Common myeloid progenitor, CD34-positive (primary cell): ENCODE measurements at regions of chr16 and their contacts with region 1.

Region 1: GRCh38 chr16:81623363-81624102 is 155.6 kb upstream of the PLCG2 start:
- DNase-seq: peak; percentile 65 to 84 (median 80)
- H3K4me3 ChIP-seq: no peak overlapping the region
- H3K27ac ChIP-seq: peak overlapping the region in 1 of 2 experiments; percentile 29
- H3K4me1 ChIP-seq: peaks cover 3 to 36% (median 25%) of the 10 kb centered on the region in 4 experiments
- H3K27me3 ChIP-seq: no peaks in the 10 kb centered on the region

Region 2: DNA sequence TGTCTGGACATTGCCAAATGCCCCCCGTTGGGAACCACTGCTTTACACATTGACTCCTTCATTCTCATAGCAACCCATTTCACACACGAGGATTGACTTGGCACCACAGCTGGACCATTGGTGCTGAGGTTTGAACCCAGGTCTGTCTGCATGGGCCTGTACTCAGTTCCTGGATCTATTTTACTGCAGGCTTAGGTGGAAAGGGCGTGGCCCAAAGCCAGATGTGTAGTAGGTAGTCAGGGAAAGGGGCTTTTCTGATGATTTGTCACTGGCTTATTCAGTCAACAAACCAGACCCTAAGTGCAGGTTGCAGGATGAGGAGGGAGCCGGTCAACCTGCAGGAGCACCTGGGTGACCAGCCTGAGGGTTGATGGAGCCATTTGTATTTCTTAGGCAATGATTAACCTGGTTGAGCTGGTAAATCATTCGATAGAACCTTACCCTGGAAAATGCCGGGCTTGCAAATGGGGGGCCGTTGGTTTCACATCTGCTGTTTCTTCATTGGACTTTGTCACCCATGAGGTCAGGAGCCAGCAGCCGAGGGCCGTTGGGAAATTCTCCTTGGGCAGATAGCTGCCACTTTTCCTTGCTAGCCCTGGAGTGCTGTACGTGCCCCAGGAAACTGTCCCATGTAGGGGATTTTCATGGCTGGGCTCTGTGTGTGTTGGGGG is 74.5 kb before region 1 on chr16:
- CTCF ChIA-PET with region 1: no interaction called
- POLR2A ChIA-PET with region 1: no interaction called
- DNase-seq: no peak
- H3K4me3 ChIP-seq: no peak overlapping the region
- H3K27ac ChIP-seq: no peak overlapping the region
- H3K4me1 ChIP-seq: peaks cover 3 to 79% (median 64%) of the 10 kb centered on the region in 4 experiments
- H3K27me3 ChIP-seq: no peaks in the 10 kb centered on the region

Region 3: GRCh38 chr16:81608518-81609209 is 14.9 kb before region 1 on chr16:
- CTCF ChIA-PET with region 1: interaction called, 12 read pairs
- POLR2A ChIA-PET with region 1: no interaction called
- DNase-seq: peak in 2 of 3 donors; percentile 68 to 79
- H3K4me3 ChIP-seq: no peak overlapping the region
- H3K27ac ChIP-seq: no peak overlapping the region
- H3K4me1 ChIP-seq: peaks cover 0 to 2% (median 0%) of the 10 kb centered on the region in 4 experiments
- H3K27me3 ChIP-seq: no peaks in the 10 kb centered on the region

Region 4: DNA sequence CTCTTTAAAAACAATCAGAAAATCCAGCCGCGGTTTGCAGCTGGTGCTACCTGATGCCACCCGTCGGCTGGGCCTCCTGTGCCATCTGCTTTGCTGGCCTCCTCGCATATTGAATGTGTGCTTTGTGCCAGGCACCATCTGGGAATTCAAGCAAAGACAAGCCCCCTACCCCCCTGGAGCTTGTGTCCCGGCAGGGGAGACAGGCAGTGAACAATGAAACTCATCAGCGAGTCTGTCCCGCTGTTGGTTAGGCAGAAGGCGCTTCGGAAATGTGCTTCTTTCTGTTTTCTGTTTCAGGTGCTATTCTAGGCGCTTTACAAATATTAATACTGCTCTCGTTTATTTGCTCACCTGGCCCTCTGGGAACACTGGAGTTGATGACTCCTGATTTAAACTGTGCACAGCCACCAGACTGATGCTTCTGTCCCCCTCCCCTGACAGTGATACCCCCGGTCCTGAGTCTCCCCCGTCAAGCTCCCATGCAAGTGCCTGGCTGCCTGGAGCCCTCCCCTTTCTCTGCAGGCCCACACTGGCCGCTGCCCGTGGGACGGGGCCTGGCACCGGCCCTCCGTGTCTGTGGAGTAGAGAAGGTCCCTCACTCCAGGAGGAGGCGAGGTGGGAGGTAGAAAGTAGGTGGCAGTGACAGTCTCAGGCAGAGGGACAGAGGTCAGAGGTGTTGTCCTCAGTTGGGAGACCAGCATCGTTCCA is 29.4 kb after region 1 on chr16:
- CTCF ChIA-PET with region 1: interaction called, 33 read pairs
- POLR2A ChIA-PET with region 1: no interaction called
- DNase-seq: no peak
- H3K4me3 ChIP-seq: no peak overlapping the region
- H3K27ac ChIP-seq: peak overlapping the region in 1 of 2 experiments; percentile 72
- H3K4me1 ChIP-seq: peaks cover 0 to 21% (median 15%) of the 10 kb centered on the region in 4 experiments
- H3K27me3 ChIP-seq: no peaks in the 10 kb centered on the region

Region 5: DNA sequence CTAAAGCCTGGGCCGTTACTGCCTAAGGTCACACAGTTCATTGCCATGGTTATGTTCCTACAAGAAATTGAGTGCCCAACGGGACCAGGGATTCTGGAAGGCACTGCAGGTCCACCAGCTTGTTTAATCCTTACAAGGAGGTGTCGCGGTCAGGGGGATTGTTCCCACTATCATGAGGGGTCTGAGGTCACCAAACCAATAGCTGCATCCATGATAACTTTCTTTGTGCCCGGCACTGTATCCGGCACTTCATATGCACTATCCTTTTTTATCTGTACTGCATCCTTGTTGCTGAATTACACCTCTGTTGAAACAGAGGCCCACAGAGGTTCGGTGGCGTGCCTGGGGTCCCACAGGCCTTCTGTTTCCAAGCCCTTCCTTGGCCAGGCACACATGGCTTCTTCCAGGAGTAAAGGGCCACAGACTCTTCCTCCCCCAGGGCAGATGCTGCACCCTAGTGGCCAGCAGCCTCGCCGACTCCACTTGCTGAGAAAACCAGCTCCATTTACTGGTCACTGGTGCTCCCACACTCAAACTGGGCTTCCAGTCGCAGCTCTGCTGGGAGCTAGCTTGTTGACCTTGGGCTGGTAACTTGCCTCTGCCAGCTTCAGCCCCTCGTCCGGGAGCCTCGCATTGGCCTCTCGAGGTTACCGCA is 73.6 kb after region 1 on chr16:
- CTCF ChIA-PET with region 1: interaction called, 234 read pairs
- POLR2A ChIA-PET with region 1: interaction called, 3 read pairs
- DNase-seq: peak; percentile 61 to 73 (median 68)
- H3K4me3 ChIP-seq: no peak overlapping the region
- H3K27ac ChIP-seq: no peak overlapping the region
- H3K4me1 ChIP-seq: peaks cover 0 to 28% (median 10%) of the 10 kb centered on the region in 4 experiments
- H3K27me3 ChIP-seq: no peaks in the 10 kb centered on the region

Region 6: GRCh38 chr16:81711657-81712319 is 88.3 kb after region 1 on chr16:
- CTCF ChIA-PET with region 1: interaction called, 26 read pairs
- POLR2A ChIA-PET with region 1: interaction called, 9 read pairs
- DNase-seq: peak in 2 of 3 donors; percentile 73 to 79
- H3K4me3 ChIP-seq: no peak overlapping the region
- H3K27ac ChIP-seq: no peak overlapping the region
- H3K4me1 ChIP-seq: peaks cover 0 to 18% (median 7%) of the 10 kb centered on the region in 4 experiments
- H3K27me3 ChIP-seq: no peaks in the 10 kb centered on the region

Region 7: DNA sequence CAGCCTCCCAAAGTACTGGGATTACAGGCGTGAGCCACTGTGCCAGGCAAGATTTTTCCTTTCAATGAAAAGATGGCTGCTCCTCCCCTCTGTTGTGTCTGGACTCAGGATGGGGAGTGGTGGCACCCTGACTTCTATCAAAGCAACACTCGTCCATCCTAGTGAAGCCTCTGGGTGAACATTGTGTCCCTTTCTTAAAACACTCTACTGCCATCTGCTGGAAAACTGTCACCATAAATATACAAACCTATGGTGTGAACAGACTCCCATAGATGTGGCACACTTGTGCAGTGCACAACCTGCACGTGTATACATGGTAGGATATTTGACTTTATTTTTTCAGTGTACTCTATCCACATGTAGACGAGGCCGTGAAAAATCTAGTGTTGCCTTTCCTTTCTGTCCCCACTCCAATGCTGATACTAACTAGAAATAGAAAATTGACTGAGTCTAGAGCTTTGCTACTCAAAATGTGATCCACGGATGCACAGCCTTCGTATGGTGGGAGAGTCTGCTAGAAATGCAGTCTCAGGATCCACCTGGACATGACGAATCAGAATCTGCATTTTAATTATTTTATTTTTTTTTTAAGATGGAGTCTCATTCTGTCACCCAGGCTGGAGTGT is 99.7 kb after region 1 on chr16:
- CTCF ChIA-PET with region 1: interaction called, 54 read pairs
- POLR2A ChIA-PET with region 1: no interaction called
- DNase-seq: peak; percentile 82 to 91 (median 90)
- H3K4me3 ChIP-seq: no peak overlapping the region
- H3K27ac ChIP-seq: no peak overlapping the region
- H3K4me1 ChIP-seq: peaks cover 2 to 9% (median 8%) of the 10 kb centered on the region in 4 experiments
- H3K27me3 ChIP-seq: no peaks in the 10 kb centered on the region

Region 8: DNA sequence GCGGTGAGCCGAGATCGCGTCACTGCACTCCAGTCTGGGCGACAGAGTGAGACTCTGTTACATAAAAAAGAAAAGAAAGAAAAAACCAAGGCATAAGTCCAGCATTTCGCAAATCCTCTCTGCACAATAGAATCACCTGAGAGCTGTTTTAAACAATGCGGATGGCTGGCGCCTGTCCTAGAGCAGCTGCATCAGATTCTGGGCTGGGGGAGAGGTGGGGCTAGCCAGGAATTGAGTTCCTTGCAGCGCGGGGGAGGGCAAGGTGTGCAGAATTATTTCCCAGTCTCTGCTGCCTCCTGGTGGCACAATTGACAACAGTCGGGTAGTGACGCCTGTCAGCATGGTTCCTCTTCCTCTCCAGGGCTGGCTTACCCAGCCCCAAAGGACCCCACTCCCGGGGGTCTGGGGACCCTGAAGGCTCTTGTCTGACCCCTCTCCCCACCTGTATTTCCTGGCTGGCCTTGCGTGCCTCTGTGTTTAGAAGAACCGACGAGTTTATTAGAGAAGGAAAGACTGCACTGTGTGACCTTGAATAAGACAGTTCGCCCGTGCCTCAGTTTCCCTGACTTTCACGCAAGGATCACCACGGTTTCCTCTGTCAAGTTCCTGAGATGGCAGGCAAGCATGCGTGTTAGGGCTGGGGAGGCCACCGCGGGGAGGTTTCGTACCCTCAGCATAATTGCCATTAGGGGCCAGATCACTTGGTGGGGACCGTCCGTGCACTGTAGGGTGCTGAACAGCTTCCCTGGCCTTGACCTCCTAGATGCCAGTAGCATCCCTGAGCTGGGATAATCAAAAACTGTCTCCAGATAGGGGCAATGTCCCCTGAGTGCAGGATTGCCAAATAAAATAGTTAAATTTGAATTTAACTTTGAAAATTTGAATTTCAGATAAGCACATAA is 114.6 kb after region 1 on chr16:
- CTCF ChIA-PET with region 1: interaction called, 33 read pairs
- POLR2A ChIA-PET with region 1: no interaction called
- DNase-seq: peak; percentile 82 to 89 (median 85)
- H3K4me3 ChIP-seq: peak overlapping the region in 6 of 7 experiments; percentile 10 to 74 (median 55)
- H3K27ac ChIP-seq: peak overlapping the region in 1 of 2 experiments; percentile 8
- H3K4me1 ChIP-seq: peaks cover 15 to 50% (median 37%) of the 10 kb centered on the region in 4 experiments
- H3K27me3 ChIP-seq: no peaks in the 10 kb centered on the region